ENCODE measurements at regions of chr4 and their contacts with region 1.

Region 1: DNA sequence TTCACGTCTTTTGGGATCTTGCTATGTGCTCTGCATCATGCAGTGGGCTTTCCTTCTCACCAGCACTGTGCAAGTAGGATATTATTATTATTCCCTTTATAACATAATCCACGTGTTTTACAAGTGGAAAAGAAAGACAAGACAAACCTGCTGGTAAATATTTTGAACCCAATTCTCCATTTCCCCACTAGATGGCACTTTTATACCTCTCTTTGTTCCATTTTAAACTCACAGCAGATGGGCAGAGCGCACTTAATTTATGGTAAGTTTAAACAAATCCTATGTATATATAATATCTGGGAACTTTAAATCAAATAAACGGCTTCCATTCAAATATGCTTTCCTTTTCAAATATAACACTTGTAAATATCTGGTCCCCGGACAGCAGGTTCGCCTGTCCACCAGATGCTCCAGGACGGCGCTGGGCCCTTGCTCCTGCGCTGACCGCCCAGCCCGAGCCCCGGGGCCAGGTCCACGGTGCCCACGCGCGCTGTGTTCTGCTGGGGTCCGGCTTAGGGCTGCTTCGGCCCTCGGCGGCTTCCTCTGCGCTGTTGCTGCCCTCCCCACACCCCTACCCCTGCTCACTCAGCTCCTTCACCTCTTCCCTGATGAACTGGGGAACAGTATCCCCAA is 31.1 kb downstream of the F11 start:
- DNase-seq: no peak
- H3K4me3 Mint-ChIP-seq: no peak overlapping the region
- H3K27ac Mint-ChIP-seq: no peak overlapping the region
- H3K4me1 Mint-ChIP-seq: no peaks in the 10 kb centered on the region
- H3K27me3 Mint-ChIP-seq: peaks cover 9% of the 10 kb centered on the region

Region 2: GRCh38 chr4:186307497-186307896 is 10.4 kb after region 1 on chr4:
- CTCF ChIA-PET with region 1: no interaction called
- POLR2A ChIA-PET with region 1: no interaction called
- DNase-seq: no peak
- H3K4me3 Mint-ChIP-seq: no peak overlapping the region
- H3K27ac Mint-ChIP-seq: no peak overlapping the region
- H3K4me1 Mint-ChIP-seq: no peaks in the 10 kb centered on the region
- H3K27me3 Mint-ChIP-seq: peaks cover under 1% of the 10 kb centered on the region

Region 3: DNA sequence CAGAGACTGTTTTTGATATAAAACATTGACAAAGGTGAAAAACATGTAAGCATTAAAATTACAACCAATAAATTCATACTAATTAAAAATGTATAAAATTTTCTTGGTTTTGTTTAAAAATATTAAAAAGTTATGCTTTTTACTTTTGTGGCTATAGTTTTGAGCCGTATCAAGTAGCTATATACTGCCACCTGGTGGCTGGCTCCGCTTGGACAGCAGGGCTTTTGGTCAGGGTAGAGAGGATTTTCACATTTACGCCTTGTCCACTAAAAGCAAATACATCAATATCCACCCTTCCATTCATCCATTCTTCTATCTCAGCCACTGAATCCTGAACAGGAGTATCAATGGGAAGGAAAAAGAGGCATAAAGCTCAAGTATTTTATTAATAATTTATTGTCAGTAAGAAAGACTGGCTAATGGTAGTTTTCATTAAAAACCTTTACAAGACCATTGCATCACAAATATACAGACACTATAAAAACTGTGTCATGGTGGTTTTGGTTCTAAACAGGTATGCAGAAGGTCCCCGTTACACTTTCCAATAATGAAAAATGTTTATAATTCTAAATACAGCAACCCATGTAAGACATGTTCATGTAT is 290.4 kb after region 1 on chr4:
- CTCF ChIA-PET with region 1: interaction called, 10 read pairs
- POLR2A ChIA-PET with region 1: no interaction called
- DNase-seq: peak; percentile 56
- H3K4me3 Mint-ChIP-seq: no peak overlapping the region
- H3K27ac Mint-ChIP-seq: no peak overlapping the region
- H3K4me1 Mint-ChIP-seq: no peaks in the 10 kb centered on the region
- H3K27me3 Mint-ChIP-seq: no peaks in the 10 kb centered on the region